ENCODE measurements at regions of chr11 and their contacts with region 1.

Region 1: DNA sequence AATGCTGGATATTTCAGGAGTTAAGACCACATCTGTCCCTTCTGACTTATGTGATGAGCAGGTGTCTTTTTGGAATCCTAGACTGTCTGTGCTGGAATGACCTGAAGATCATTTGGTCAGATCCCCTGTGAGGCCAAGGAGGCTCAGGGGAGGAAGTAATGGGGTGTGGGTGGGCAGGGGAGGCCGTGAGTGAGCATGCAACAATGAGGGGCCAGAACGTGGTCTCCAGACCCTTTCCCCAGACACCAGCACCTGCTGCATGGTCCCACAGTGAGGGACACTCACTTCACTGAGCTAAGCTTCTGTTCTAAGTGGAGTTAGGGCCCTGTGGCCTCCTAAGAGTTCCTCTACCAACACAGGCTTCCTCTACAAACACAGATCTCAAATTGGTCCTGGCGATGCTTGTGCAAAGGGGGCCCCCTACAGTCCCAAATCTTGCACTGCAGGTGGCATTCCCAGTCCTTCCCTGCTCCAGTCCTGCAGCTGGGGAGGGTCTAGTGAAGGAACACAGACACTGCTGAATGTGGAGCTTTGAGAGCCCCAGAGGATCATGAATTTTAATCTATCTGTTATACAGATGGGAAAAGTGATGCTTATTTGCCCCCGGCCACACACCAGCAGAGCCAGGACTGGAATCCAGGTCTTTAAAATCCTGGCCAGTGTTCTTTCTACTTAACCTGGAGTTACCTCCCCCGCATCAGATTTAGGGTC is 7.4 kb downstream of the USP2 start:
- DNase-seq: peak; percentile 87

Region 2: GRCh38 chr11:119421941-119422808 is 48.1 kb after region 1 on chr11:
- in situ Hi-C with region 1: no loop called
- DNase-seq: peak; percentile 71

Region 3: DNA sequence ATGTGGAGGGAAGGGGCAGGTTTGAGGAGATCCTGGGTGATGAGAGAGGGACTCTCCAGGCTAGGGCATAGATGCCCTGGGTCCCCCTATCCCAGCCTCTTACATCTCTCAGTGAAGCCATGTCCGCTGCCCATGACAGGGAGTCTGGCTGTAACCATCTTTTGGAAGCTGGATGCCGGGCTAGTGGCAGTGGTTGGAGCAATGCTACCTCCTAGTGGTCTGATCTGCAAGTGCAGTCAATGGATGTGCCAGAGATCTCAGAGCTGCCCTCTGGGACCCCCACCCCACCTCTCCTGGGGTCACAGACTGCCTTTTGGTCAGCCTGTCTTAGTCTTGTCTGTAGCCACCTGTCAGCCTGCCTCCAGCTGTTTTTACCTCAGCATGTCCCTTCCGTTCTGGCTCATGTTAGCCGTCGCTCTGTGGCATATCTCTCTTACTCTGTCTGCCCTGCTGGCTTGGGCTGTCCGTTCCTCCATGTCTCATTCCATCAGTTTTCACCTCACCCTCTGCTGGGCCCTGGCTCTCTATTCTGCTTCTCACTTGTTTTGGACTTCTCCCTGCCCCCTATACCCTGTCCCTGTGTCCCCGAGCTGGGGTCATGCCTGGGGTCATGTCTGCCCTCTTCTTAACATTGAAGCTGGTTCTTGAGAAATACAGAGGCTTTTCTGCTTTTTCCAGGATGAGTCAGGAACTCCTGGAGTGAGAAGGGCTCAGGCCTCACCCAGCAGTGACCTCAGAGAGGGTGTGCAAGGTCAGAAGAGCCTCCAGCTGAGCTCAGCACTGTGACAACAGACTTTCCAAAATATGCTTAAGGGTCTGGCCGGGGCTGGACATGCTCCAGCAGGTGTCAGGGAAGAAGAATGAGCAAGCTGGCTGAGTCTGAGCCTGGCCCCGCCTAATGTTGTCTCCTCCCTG is 100.9 kb after region 1 on chr11:
- in situ Hi-C with region 1: loop called (anchors 10 kb)
- DNase-seq: peak; percentile 81

Region 4: DNA sequence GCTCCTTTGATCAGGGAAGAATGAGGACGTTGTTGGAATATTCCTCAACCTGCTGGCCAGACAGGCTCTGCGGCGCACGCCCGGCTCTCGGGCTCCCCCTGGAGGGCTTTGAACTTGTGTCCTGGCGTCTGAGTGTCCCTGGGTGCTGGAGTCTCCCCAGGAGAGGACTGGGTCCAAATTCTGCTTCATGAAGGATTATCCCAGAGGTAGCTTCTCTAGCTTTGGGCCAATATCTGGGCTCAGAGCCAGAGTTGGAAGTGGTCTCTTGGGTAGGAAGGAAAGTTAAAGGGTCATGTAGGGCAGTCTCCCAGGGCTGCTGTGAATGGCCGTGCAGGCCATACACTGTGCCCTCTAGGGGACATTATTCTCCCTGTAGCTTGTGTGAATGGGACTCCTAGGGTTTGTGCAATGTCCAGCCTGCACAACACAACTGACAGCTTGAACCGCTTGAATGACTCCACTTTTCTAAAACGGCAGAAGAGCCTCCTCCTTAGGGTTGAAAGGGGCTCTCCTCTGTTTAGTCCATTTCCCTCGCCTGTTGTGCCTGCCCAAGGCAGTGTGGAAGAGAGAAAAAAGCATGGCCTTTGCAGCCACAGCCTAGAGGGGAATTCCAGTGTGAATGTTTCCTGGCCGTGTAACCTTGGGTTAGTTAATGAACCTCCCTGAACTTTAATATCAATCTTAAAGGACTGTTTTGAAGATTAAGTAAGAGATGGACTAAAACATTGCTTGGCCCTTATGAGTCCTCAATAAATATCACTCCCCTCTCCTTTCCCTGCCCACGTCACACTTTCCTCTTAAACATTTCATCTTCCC is 160.1 kb after region 1 on chr11:
- in situ Hi-C with region 1: no loop called
- DNase-seq: peak; percentile 71